HCT116 (cell line): ENCODE measurements at regions of chr12 and their contacts with region 1.

Region 1: GRCh38 chr12:66538970-66539369 is 139.9 kb downstream of the GRIP1 start:
- DNase-seq: no peak
- ATAC-seq: no peak
- H3K4me3 ChIP-seq: no peak overlapping the region
- H3K27ac ChIP-seq: no peak overlapping the region
- H3K4me1 ChIP-seq: peaks cover 0 to 5% of the 10 kb centered on the region in 2 experiments; a peak in 1 of 4 replicates
- H3K27me3 ChIP-seq: peaks cover 47% of the 10 kb centered on the region
- CTCF ChIP-seq: no peak
- POLR2A ChIP-seq: no peak
- RAD21 ChIP-seq: no peak

Region 2: DNA sequence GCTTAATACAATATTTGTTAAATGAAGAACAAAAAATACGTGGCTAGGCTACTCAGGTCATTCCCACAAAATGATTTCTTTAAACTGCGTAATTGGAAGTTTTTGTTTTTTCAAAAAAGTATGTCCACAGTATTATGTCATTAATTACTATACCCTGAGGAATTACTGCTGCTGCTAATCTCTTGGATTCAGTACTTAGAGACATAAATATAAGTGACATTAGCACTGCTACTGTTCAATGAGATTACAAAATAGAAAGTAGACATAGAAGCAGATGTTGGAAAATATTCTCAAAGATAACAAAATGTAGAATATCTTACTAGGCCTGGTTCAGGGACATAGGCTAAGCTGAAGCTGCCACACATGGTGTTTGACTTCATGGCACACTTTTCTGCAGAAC is 678.4 kb before region 1 on chr12:
- CTCF ChIA-PET with region 1: no interaction called
- POLR2A ChIA-PET with region 1: no interaction called
- RAD21 ChIA-PET with region 1: no interaction called
- intact Hi-C with region 1: loop called (anchors 1 kb)
- DNase-seq: no peak
- ATAC-seq: no peak
- H3K4me3 ChIP-seq: no peak overlapping the region
- H3K27ac ChIP-seq: peak overlapping the region; percentile 9; the same call in 1 of the 2 replicates
- H3K4me1 ChIP-seq: peaks cover 2 to 38% of the 10 kb centered on the region in 2 experiments; a peak in 3 of 4 replicates
- H3K27me3 ChIP-seq: no peaks in the 10 kb centered on the region
- CTCF ChIP-seq: no peak
- POLR2A ChIP-seq: no peak
- RAD21 ChIP-seq: no peak